Astrocyte of the cerebellum (primary cell): ENCODE measurements at regions of chr9 and their contacts with region 1.

Region 1: DNA sequence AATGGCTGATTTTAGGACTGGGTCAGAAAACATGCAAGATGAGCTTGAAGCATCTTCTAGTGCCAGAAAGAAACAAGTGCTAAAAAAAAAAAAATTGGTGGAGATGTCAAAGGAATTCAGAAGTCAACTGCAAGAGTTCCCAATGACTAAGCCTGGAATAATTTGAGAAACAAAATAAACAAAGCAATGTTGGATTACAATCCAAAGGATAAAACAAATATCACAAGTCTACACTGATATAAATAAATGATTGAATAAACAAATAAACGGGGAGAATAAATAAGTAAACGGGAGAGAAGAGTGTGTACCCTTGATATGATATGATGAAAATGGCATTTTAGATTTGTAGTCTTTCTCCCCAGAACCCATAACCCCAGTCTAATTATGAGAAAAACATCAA is 63.4 kb upstream of the CCL21 start:
- DNase-seq: no peak
- H3K4me3 ChIP-seq: no peak overlapping the region
- CTCF ChIP-seq: no peak

Region 2: DNA sequence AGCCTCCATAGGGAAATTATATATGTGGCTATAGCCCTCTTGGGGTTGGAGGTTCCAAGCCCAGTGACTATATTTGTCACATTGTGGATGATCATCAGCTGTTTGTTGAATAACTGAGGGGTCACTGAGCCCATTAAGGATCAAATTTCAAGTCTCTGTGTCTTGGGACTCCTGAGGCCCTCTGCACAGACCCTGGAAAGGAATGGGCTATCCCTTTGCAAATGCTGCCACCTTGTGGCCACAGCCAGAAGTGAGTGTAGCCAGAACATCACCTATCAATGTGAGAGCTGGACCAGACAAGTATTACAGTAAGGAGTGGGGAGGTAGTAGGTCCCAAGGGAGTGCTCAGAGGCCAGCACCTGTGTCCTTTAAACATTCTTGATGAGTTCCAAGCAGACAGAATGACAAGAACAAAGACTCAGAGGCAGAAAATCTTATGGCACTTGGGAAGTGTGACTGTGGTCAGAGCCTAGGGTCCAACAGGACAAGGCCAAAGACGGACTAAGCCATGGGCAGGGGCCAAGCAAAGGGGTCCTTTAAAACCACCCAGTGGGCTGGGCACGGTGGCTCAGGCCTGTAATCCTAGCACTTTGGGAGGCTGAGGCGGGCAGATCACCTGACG is 169.6 kb before region 1 on chr9:
- in situ Hi-C with region 1: no loop called
- DNase-seq: peak; percentile 54
- H3K4me3 ChIP-seq: no peak overlapping the region
- CTCF ChIP-seq: peak; percentile 90

Region 3: GRCh38 chr9:34823786-34824185 is 50.4 kb after region 1 on chr9:
- in situ Hi-C with region 1: loop called (anchors 5 kb)
- DNase-seq: no peak
- H3K4me3 ChIP-seq: no peak overlapping the region
- CTCF ChIP-seq: no peak